ENCODE measurements at regions of chr3 and their contacts with region 1.

Region 1: DNA sequence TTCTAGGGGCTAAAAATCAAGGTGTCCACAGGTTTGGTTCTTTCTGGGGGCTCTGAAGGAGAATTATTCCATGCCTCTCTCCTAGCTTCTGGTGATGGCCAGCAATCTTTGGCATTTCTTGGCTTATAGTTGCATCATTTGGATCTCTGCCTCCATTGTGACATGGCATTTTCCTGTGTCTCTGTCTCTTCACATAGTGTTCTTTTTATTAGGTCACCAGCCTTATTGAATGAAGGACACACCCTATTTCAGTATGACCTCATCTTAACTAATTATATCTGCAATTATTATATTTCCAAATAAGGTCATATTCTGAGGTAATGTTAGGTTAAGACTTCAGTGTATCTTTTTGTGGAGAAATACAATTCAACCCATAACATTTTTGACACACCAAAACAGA is 3.2 kb upstream of the GBE1 start:
- DNase-seq: no peak
- H3K4me3 ChIP-seq: no peak overlapping the region
- H3K27ac ChIP-seq: no peak overlapping the region
- H3K4me1 ChIP-seq: peaks cover 0 to 19% (median 15%) of the 10 kb centered on the region in 4 donors
- H3K27me3 ChIP-seq: no peaks in the 10 kb centered on the region
- CTCF ChIP-seq: no peak
- EP300 ChIP-seq: no peak
- POLR2A ChIP-seq: no peak

Region 2: DNA sequence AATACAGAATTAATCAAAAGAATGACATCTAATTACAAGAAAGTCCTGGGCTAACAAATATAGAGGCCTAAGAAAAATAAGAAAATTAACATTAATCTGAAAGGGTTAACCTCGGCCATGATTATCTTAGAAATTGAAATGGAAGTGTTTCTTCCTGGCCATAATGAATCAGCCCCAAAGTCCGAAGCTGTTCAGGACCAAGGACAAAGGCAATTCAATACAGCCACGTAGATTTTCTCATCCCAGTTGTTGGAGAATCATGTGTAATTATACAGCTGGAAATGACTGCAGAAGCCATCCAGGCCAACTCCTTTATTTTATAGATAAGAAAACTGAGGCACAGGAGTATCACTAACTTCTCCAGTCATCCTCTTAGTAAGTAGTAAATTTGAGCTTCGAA is 34.7 kb after region 1 on chr3:
- in situ Hi-C with region 1: no loop called
- intact Hi-C with region 1: loop called (anchors 1 kb)
- DNase-seq: no peak
- H3K4me3 ChIP-seq: no peak overlapping the region
- H3K27ac ChIP-seq: no peak overlapping the region
- H3K4me1 ChIP-seq: no peaks in the 10 kb centered on the region
- H3K27me3 ChIP-seq: no peaks in the 10 kb centered on the region
- CTCF ChIP-seq: no peak
- EP300 ChIP-seq: no peak
- POLR2A ChIP-seq: no peak